Naive thymus-derived CD4-positive, alpha-beta T cell (primary cell): ENCODE measurements at regions of chr6 and their contacts with region 1.

Region 1: DNA sequence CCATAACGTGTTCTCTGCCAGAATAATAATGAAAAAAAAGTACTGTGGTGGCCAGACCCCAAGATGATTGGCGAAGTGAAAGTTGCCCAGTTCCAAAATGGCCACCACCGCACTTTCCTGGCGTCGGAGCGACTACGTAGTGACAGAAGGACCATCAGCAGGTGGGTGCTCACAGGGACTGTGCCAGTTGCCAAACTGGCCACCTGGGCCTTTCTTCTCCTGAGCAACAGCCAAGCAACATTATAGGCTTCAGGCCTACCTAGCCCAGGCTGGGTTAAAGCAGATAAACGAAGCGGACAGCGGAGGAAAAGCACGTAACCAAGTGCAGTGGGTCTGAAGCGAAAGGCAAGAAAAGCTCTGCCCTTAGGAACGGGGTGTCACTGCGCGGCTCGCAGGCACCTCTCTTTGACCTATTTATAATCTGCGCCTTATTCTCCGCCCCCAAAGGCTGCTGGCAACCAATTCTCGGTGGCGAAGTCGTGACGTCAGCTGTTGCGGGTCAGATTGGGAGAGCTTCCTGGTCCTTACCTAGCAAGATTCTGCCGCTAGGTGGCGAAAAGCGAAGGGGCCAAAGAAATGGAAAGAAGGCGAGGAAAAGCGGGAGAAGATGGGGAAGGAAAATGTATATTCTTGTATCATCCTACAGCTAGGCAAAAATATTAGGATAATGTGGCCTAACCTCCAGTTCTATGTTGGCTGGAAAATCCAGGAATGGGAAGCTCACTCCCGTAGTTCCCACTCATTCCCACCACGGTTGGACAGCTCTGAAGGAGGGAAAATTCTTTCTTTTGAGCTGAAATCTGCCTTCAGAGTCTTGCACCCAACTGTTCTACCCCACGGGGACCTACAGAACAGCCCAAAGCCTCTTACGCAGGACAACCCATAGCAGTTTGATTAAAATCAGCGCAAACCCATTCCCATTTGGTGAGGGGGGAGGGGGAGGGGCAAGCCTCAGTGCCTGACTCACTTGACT is 6.9 kb upstream of the MOG start:
- DNase-seq: peak; percentile 88 to 99 (median 97)
- ATAC-seq: peak; percentile 95
- H3K4me3 ChIP-seq: peak overlapping the region; percentile 83
- H3K4me3 Mint-ChIP-seq: peak overlapping the region; percentile 74 to 98 (median 96)
- H3K27ac ChIP-seq: peak overlapping the region; percentile 94
- H3K27ac Mint-ChIP-seq: peak overlapping the region; percentile 95 to 100 (median 100)
- H3K4me1 ChIP-seq: peaks cover 4 to 7% of the 10 kb centered on the region in 2 donors
- H3K4me1 Mint-ChIP-seq: peaks cover 5 to 21% (median 13%) of the 10 kb centered on the region in 7 donors
- H3K27me3 ChIP-seq: no peaks in the 10 kb centered on the region
- H3K27me3 Mint-ChIP-seq: peaks cover 0 to 11% (median 2%) of the 10 kb centered on the region in 5 donors

Region 2: GRCh38 chr6:29617782-29618557 is 32.0 kb before region 1 on chr6:
- CTCF ChIA-PET with region 1: interaction called, 9 read pairs
- POLR2A ChIA-PET with region 1: no interaction called
- intact Hi-C with region 1: loop called in 1 of 2 experiments (anchors 1 kb)
- DNase-seq: no peak
- ATAC-seq: no peak
- H3K4me3 ChIP-seq: no peak overlapping the region
- H3K4me3 Mint-ChIP-seq: no peak overlapping the region
- H3K27ac ChIP-seq: no peak overlapping the region
- H3K27ac Mint-ChIP-seq: peak overlapping the region in 1 of 9 donors; percentile 44
- H3K4me1 ChIP-seq: no peaks in the 10 kb centered on the region
- H3K4me1 Mint-ChIP-seq: no peaks in the 10 kb centered on the region
- H3K27me3 ChIP-seq: no peaks in the 10 kb centered on the region
- H3K27me3 Mint-ChIP-seq: no peaks in the 10 kb centered on the region

Region 3: DNA sequence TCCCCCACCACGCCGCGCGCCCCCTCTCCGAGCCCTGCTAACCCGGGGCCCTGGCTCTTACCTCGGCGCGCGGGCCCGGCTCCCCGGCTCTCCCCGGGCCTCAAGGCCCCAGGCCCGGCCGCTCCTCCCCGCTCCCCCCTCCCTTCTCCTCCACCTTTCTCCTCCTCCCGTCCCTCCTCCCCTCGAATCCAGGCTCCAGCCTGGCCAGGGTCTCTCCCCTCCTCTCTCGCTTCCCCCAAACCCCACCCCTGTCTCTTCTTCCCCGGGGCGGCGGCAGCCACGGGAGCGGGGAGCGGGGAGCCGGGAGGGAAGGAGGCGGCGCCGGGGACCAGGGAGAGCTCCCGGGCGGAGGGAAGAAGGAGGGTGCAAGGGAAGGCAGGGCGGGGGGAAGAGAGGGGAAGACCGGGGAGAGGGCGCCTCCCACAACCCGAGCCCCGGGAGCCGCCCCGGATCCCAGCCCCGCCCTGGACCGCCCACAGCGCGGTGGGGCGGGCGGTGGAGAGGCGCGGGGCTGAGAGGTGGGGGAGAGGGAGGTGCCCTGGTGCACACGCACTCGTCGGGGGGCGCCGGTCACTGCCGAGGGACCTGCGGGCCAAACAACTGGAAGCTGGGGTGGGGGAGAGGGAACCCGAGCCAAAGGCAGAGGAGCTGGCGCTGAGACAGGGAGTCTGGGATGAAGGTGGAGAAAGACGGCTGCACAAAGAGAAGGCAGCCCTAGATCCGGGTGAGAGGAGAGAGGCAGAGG is 17.0 kb before region 1 on chr6 and contains the start of gene GABBR1:
- CTCF ChIA-PET with region 1: interaction called, 25 read pairs
- POLR2A ChIA-PET with region 1: interaction called, 28 read pairs
- intact Hi-C with region 1: loop called (anchors 1 kb)
- DNase-seq: peak; percentile 54 to 85 (median 62)
- ATAC-seq: peak; percentile 89
- H3K4me3 ChIP-seq: peak within 1 kb of the TSS; percentile 51
- H3K4me3 Mint-ChIP-seq: peak within 1 kb of the TSS; percentile 77 to 98 (median 92)
- H3K27ac ChIP-seq: peak within 1 kb of the TSS; percentile 77
- H3K27ac Mint-ChIP-seq: peak within 1 kb of the TSS; percentile 19 to 97 (median 86)
- H3K4me1 ChIP-seq: peaks cover 27 to 29% of the 10 kb centered on the region in 2 donors
- H3K4me1 Mint-ChIP-seq: peaks cover 39 to 59% (median 54%) of the 10 kb centered on the region in 7 donors
- H3K27me3 ChIP-seq: no peaks in the 10 kb centered on the region
- H3K27me3 Mint-ChIP-seq: peaks cover 0 to 64% (median 0%) of the 10 kb centered on the region in 5 donors
- total RNA-seq, gene GABBR1: 37.0 to 115 (median 61.9) TPM

Region 4: DNA sequence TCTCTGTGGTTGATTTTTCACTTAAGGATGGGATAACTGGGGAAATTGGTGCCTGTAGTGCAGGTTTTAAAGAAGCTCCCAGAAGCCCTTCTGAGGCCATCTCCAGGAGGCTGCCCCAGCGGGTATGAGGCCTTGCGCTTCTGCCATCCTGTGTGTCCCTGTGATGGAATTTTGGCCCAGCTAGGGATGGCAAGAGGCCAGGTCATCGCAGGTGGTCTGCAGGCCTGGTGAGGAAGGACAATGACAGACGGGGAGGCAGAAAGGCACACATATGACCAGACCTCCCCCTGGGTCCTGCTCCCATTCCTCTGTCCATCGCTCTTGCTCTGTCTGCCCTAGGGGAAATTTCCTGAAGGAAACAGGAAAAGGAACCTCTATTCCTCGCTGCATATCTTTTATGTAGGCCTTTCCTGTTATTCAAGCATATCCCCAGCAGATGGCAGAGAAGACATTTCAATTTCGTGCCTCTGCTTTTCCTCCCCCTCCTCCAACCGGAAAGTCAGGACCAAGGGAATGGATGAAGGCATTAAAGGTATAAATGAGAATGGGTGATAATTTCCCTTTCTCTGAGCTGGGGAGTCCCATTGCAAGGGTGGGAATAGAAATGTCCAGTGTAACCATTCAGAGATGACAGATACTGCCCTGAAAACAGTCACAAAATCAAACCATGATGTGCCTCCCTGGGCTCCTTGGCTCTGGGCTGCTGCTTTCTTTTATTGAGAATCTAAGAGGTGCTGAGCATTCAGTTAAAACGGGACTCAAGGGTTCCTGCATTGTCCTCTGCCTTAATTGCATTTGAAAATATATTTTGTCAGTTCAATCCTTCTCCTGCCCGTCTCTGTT is 55.6 kb after region 1 on chr6:
- CTCF ChIA-PET with region 1: interaction called, 10 read pairs
- POLR2A ChIA-PET with region 1: interaction called, 4 read pairs
- intact Hi-C with region 1: loop called (anchors 5 kb)
- DNase-seq: peak in 4 of 9 donors; percentile 41 to 60 (median 43)
- ATAC-seq: no peak
- H3K4me3 ChIP-seq: no peak overlapping the region
- H3K4me3 Mint-ChIP-seq: peak overlapping the region in 6 of 10 donors; percentile 20 to 77 (median 42)
- H3K27ac ChIP-seq: peak overlapping the region; percentile 2
- H3K27ac Mint-ChIP-seq: peak overlapping the region in 8 of 9 donors; percentile 16 to 95 (median 82)
- H3K4me1 ChIP-seq: peaks cover 47 to 54% of the 10 kb centered on the region in 2 donors
- H3K4me1 Mint-ChIP-seq: peaks cover 21 to 59% (median 51%) of the 10 kb centered on the region in 7 donors
- H3K27me3 ChIP-seq: no peaks in the 10 kb centered on the region
- H3K27me3 Mint-ChIP-seq: peaks cover 4 to 37% (median 8%) of the 10 kb centered on the region in 5 donors

Region 5: DNA sequence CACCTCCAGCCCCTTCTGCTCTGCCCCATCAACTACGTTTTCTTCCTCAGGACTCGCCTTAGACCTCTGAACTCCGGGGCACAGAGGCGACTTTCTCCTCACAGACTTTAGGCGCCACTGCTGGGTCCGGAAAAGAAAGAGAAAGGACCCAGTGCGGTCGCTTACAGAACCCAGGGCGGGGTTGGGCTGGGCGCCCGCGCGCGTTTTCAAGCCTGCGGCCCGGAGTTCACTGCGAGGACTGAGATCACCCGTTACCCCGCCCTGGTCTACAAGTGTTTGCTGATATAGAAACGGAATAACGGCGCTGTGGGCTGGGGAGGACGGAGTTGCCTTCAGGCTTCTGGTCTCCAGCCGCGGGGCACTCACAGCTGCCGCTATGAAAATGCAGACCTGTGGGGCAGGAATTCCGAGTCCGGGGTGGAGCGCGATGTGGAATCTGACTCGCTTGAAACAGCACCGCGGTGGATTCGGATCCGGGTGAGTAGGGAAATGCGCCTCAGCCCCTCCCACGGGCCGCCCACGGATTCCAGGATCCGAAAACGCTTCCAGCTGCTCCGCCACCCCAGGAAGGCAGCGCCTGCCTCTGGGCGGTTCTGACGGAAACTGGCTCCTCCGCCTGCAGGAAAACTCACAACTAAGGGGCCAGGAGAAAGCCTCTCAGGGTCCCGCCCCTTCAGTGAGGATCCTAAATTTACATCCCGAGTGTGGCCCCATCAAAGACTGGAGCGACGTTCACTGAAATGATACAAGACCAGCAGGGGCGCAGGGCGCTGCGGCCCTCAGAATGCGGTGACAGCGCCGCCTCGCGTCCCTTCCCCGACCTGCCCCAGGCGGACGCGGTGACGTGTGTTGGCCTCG is 102.7 kb after region 1 on chr6:
- CTCF ChIA-PET with region 1: interaction called, 4 read pairs
- POLR2A ChIA-PET with region 1: interaction called, 6 read pairs
- intact Hi-C with region 1: loop called (anchors 1 to 2 kb)
- DNase-seq: peak; percentile 69 to 86 (median 77)
- ATAC-seq: peak; percentile 87
- H3K4me3 ChIP-seq: peak overlapping the region; percentile 99
- H3K4me3 Mint-ChIP-seq: peak overlapping the region; percentile 85 to 97 (median 93)
- H3K27ac ChIP-seq: peak overlapping the region; percentile 69
- H3K27ac Mint-ChIP-seq: peak overlapping the region; percentile 16 to 96 (median 88)
- H3K4me1 ChIP-seq: peaks cover 10 to 16% of the 10 kb centered on the region in 2 donors
- H3K4me1 Mint-ChIP-seq: peaks cover 24 to 54% (median 48%) of the 10 kb centered on the region in 7 donors
- H3K27me3 ChIP-seq: no peaks in the 10 kb centered on the region
- H3K27me3 Mint-ChIP-seq: peaks cover 0 to 18% (median 0%) of the 10 kb centered on the region in 5 donors

Region 6: GRCh38 chr6:30066577-30067459 is 416.8 kb after region 1 on chr6 and contains the start of gene PPP1R11:
- CTCF ChIA-PET with region 1: interaction called, 4 read pairs
- POLR2A ChIA-PET with region 1: no interaction called
- intact Hi-C with region 1: loop called in 1 of 2 experiments (anchors 2 kb)
- DNase-seq: peak; percentile 84 to 100 (median 99)
- ATAC-seq: peak; percentile 99
- H3K4me3 ChIP-seq: peak within 1 kb of the TSS; percentile 94
- H3K4me3 Mint-ChIP-seq: peak within 1 kb of the TSS; percentile 87 to 100 (median 98)
- H3K27ac ChIP-seq: peak within 1 kb of the TSS; percentile 96
- H3K27ac Mint-ChIP-seq: peak within 1 kb of the TSS; percentile 96 to 100 (median 99)
- H3K4me1 ChIP-seq: peaks cover 28 to 41% of the 10 kb centered on the region in 2 donors
- H3K4me1 Mint-ChIP-seq: peaks cover 43 to 77% (median 71%) of the 10 kb centered on the region in 7 donors
- H3K27me3 ChIP-seq: no peaks in the 10 kb centered on the region
- H3K27me3 Mint-ChIP-seq: peaks cover 10 to 22% (median 16%) of the 10 kb centered on the region in 5 donors
- total RNA-seq, gene PPP1R11: 49.4 to 67.1 (median 62.7) TPM